Activated naive CD4-positive, alpha-beta T cell treated with anti-CD3 and anti-CD28 coated beads, Interleukin-2, amount 10 ng/mL, durations not matched to agents 7 days and 5 days (primary cell): ENCODE measurements at regions of chr15 and their contacts with region 1.

Region 1: DNA sequence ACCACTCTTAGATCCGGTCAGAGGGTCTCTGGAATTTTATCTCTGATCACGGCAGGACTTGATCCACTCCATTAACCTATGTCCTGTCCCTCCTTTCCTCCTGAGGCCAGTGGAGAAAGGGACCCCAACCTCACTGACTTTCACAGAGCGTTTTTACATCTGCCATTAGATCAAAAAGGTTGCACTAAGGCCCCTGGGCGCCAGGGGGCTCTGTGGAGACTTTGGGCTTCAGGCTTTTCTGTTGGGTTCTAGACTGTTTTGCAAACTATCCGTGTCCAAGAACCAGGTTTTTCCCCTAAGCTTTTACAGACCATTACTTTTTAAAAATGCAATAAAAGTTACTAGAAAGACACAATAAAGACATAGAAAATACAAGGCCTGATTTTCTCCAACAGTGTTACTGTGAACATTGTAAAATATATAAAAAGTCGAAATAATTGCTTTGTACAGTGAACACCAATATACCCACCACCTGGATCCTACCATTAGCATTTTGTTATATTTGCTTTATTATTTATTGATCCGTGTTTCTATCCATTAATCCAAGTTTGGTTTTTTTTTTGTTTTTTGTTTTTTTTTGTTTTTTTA is 159.7 kb downstream of the POLR2M start:
- DNase-seq: peak; percentile 72
- H3K4me3 Mint-ChIP-seq: no peak overlapping the region
- H3K27ac Mint-ChIP-seq: no peak overlapping the region
- H3K4me1 Mint-ChIP-seq: peaks cover 10% of the 10 kb centered on the region
- H3K27me3 Mint-ChIP-seq: peaks cover 46% of the 10 kb centered on the region

Region 2: GRCh38 chr15:58010983-58011382 is 144.7 kb after region 1 on chr15:
- CTCF ChIA-PET with region 1: no interaction called
- DNase-seq: no peak
- H3K4me3 Mint-ChIP-seq: no peak overlapping the region
- H3K27ac Mint-ChIP-seq: no peak overlapping the region
- H3K4me1 Mint-ChIP-seq: no peaks in the 10 kb centered on the region
- H3K27me3 Mint-ChIP-seq: peaks cover 17% of the 10 kb centered on the region

Region 3: GRCh38 chr15:58182460-58183163 is 316.4 kb after region 1 on chr15:
- CTCF ChIA-PET with region 1: interaction called, 12 read pairs
- DNase-seq: peak; percentile 46
- H3K4me3 Mint-ChIP-seq: no peak overlapping the region
- H3K27ac Mint-ChIP-seq: no peak overlapping the region
- H3K4me1 Mint-ChIP-seq: no peaks in the 10 kb centered on the region
- H3K27me3 Mint-ChIP-seq: peaks cover 32% of the 10 kb centered on the region